Mammary epithelial cell (primary cell): ENCODE measurements at regions of chr15 and their contacts with region 1.

Region 1: GRCh38 chr15:81155375-81156218 is 21.5 kb downstream of the CFAP161 start:
- DNase-seq: peak; percentile 63
- H3K4me3 ChIP-seq: no peak overlapping the region
- H3K27ac ChIP-seq: no peak overlapping the region
- H3K4me1 ChIP-seq: peaks cover 33% of the 10 kb centered on the region
- H3K27me3 ChIP-seq: no peaks in the 10 kb centered on the region
- CTCF ChIP-seq: peak; percentile 66 to 71

Region 2: DNA sequence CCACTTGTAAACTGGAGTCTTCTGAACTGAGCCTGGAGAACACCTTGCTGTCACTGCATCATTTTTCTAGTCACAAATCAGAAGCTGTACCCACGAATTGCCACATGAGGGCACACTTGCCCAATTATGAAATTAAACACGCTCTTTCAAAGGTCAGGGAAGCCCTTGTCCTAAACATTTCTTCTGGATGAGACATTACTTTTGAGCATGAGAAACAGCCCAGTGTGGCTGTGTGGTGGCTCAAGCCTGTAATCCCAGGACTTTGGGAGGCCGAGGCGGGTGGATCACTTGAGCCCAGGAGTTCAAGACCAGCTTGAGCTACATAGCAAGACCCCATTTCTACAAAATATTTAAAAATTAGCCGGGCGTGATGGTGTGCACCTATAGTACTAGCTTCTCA is 49.0 kb before region 1 on chr15:
- CTCF ChIA-PET with region 1: no interaction called
- dilution Hi-C with region 1: no loop called
- in situ Hi-C with region 1: loop called in 1 of 2 experiments (anchors 5 kb)
- intact Hi-C with region 1: loop called (anchors 1 kb)
- DNase-seq: peak; percentile 67
- H3K4me3 ChIP-seq: no peak overlapping the region
- H3K27ac ChIP-seq: no peak overlapping the region
- H3K4me1 ChIP-seq: peaks cover 11% of the 10 kb centered on the region
- H3K27me3 ChIP-seq: no peaks in the 10 kb centered on the region
- CTCF ChIP-seq: peak; percentile 79 to 82

Region 3: DNA sequence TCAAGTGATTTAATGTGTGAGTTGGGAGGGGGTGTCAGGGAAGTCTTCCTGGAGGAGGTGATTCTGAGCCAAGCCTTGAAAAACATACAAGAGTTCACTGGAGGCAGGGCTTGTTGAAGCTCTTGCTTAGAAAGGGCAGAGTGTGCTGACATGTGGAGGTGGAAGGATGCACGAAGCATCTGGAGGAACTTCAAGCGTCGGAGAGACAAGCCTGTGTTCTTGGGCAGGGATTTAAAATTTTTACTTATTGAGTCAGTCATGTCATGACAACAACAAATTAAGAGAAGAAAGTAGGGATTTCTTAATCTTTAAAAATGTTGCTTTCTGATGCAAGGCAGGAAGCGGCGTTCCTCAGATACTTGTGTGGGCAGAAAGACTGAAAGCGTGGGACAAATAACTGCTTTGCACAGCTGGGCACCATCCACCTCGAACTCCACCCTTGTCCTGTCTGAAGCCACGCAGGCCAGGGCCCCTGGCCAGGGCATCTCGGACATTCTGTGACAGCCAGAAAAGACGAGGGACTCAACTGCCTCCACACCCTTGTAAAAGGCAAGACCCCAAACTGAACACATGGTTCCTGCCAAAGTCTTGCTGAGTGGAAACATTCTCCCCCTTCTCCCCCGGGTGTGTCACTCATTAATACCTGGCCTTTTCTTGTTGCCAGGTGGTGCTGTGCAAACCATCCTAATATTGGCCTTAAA is 34.1 kb after region 1 on chr15:
- CTCF ChIA-PET with region 1: interaction called, 7 read pairs
- dilution Hi-C with region 1: no loop called
- in situ Hi-C with region 1: no loop called
- intact Hi-C with region 1: loop called (anchors 2 kb)
- DNase-seq: peak; percentile 63
- H3K4me3 ChIP-seq: no peak overlapping the region
- H3K27ac ChIP-seq: peak overlapping the region; percentile 31
- H3K4me1 ChIP-seq: peaks cover 17% of the 10 kb centered on the region
- H3K27me3 ChIP-seq: no peaks in the 10 kb centered on the region
- CTCF ChIP-seq: no peak

Region 4: DNA sequence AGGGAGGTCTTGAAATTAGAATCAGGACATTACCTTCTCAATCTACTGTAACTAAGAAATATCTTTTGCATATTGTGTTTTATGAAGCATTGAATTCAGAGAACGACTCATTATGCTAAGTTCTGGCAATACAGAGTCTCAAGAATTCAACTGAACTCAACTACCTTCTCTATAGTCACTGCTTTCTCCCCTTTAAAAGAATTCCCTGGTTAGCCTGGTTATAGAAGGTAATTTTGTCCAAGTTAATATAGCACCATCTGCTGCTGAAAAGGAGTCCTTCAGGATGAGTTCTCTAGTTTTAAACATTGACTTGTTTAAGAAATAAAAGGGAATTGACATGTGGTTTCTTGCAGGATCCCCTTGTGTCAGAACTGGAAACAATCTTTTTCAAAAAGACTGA is 101.3 kb after region 1 on chr15:
- CTCF ChIA-PET with region 1: no interaction called
- dilution Hi-C with region 1: loop called (anchors 5 kb)
- in situ Hi-C with region 1: loop called (anchors 10 kb)
- intact Hi-C with region 1: loop called (anchors 1 kb)
- DNase-seq: peak; percentile 34
- H3K4me3 ChIP-seq: no peak overlapping the region
- H3K27ac ChIP-seq: no peak overlapping the region
- H3K4me1 ChIP-seq: peaks cover 10% of the 10 kb centered on the region
- H3K27me3 ChIP-seq: no peaks in the 10 kb centered on the region
- CTCF ChIP-seq: peak; percentile 36 to 68

Region 5: GRCh38 chr15:81342561-81342960 is 187.0 kb after region 1 on chr15:
- CTCF ChIA-PET with region 1: no interaction called
- dilution Hi-C with region 1: loop called (anchors 5 kb)
- in situ Hi-C with region 1: no loop called
- intact Hi-C with region 1: no loop called
- DNase-seq: no peak
- H3K4me3 ChIP-seq: no peak overlapping the region
- H3K27ac ChIP-seq: no peak overlapping the region
- H3K4me1 ChIP-seq: peaks cover 18% of the 10 kb centered on the region
- H3K27me3 ChIP-seq: no peaks in the 10 kb centered on the region
- CTCF ChIP-seq: no peak